ENCODE measurements at regions of chr6 and their contacts with region 1.

Region 1: DNA sequence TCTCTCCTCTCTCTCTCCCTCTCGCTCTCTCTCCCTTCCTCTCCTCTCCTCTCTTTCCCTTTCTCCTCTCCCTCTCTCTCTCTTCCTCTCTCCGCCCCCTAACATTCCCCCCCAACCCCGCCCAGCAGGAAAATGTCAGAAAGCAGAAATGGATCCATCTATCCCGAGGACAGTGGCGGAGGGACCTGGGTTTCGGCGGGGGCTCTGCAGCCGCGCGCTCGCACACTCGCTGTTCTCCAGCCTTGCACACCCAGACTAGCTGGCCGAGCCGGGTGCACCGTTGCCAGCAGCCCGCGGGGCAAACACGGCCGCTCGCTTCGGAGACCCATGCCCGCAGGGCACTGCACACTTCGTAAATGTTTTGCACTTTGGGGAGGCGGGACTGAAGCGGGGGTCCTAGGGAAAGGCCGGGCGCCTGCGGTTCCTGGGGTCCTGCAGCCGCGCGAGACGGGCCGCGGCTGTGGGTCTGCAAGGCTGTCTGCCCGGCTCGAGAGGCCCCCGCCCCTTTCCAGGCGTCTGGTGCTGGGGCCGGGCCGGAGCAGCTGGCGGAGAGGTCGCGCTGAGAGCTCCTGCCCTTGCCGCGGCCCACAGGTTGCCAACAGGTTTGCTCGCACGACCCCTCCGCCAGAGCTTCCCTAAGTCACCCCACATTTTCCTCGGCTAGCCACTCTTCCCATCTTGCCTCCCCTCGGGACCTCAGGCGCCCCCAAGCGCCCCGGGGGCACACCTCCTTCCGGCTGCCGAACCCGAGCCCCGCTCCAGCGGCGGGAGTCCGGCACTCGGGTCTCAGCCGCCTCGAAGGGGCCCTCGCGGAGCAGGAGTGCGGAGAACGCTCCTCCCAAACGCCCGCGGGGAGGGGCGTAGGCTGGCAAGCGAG is 816 bp upstream of the MDGA1 start:
- DNase-seq: peak; percentile 66 to 85 (median 74)
- H3K4me3 ChIP-seq: peak overlapping the region; percentile 47 to 60
- H3K4me3 Mint-ChIP-seq: peak overlapping the region; percentile 92 to 100 (median 100)
- H3K27ac ChIP-seq: peak overlapping the region; percentile 33
- H3K27ac Mint-ChIP-seq: peak overlapping the region; percentile 92 to 100 (median 98)
- H3K4me1 ChIP-seq: peaks cover 17% of the 10 kb centered on the region
- H3K4me1 Mint-ChIP-seq: peaks cover 17 to 52% (median 26%) of the 10 kb centered on the region in 4 donors
- H3K27me3 ChIP-seq: peaks cover 14% of the 10 kb centered on the region
- H3K27me3 Mint-ChIP-seq: peaks cover 0 to 6% of the 10 kb centered on the region in 2 donors

Region 2: DNA sequence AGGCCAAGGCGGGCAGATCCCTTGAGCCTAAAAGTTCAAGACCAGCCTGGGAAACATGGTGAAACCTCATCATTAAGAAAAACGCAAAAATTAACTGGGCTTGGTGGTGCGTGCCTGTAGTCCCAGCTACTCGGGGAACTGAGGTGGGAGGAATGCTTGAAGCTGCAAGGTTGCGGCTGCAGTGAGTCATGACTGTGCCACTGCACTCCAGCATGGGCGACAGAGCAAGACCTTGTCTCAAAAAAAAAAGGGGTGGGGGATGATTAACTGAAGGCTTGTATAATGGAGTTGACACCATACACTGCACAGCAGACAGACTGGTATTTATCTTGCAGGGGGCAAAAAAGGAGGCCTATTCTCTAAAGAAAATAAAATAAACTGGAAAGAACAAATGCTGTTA is 1805.3 kb before region 1 on chr6:
- CTCF ChIA-PET with region 1: no interaction called
- POLR2A ChIA-PET with region 1: no interaction called
- intact Hi-C with region 1: no loop called
- DNase-seq: no peak
- H3K4me3 ChIP-seq: no peak overlapping the region
- H3K4me3 Mint-ChIP-seq: no peak overlapping the region
- H3K27ac ChIP-seq: no peak overlapping the region
- H3K27ac Mint-ChIP-seq: peak overlapping the region in 1 of 7 donors; percentile 13
- H3K4me1 ChIP-seq: no peaks in the 10 kb centered on the region
- H3K4me1 Mint-ChIP-seq: peaks cover 19 to 28% (median 22%) of the 10 kb centered on the region in 4 donors
- H3K27me3 ChIP-seq: no peaks in the 10 kb centered on the region
- H3K27me3 Mint-ChIP-seq: no peaks in the 10 kb centered on the region

Region 3: DNA sequence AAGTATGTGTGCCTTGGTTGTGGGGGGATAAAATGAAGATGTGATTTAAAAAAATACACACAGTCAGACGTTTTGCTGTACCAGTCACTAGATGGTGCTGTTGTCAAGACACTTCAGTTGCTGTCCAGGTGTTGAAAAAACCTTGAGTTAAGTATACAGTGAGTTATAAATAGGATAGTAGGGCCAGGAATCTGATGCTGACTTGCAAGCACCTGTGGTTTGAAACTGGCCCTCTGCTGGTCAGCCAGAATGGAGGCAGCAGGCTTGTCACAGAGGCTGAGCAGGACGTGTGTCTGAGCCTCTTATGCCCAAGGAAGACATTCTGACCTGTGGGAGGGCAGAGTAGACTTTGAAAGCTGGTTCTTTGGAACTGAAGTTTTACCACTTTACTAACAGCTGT is 316.9 kb before region 1 on chr6:
- CTCF ChIA-PET with region 1: no interaction called
- POLR2A ChIA-PET with region 1: no interaction called
- intact Hi-C with region 1: loop called (anchors 1 kb)
- DNase-seq: peak; percentile 41 to 55 (median 45)
- H3K4me3 ChIP-seq: no peak overlapping the region
- H3K4me3 Mint-ChIP-seq: no peak overlapping the region
- H3K27ac ChIP-seq: no peak overlapping the region
- H3K27ac Mint-ChIP-seq: peak overlapping the region in 2 of 7 donors; percentile 25 to 33
- H3K4me1 ChIP-seq: no peaks in the 10 kb centered on the region
- H3K4me1 Mint-ChIP-seq: peaks cover 0 to 2% (median 0%) of the 10 kb centered on the region in 4 donors
- H3K27me3 ChIP-seq: no peaks in the 10 kb centered on the region
- H3K27me3 Mint-ChIP-seq: no peaks in the 10 kb centered on the region

Region 4: DNA sequence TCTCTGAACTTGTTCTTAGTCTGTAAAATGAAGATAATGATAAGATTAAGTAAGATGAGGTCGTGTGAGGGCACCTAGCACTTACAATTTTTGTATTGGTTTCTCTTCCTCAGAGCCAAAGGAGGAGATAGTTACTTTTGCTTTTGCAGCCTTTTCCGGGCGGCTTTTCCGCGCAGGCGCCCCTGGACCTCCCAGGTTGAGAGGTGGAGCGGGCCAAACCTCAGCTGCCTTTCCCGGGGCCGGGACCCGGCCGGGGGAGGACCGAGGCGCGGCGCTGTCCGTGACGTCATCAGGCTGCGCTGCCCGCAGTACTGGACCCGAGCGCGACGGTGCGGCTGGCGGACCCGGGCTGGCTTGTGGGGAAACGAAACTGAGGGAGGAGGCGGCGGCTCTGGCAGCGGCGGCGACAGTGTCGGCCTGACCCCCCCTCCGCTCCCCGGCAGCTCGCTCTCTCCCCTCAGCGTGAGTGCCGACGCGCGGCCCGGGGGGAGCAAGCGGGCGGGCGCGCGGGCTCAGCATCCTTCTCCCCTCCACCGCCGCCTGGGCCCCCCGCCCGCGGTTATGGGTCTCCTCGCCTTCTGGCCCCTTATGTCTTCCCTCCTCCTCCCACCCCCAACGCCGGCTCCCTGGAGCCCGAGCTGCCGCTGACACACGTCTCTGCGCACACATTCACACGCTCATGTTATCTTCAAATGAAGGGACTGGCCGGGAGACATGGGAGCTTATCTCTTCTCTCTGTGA is 265.4 kb before region 1 on chr6 and contains the start of gene CMTR1:
- CTCF ChIA-PET with region 1: no interaction called
- POLR2A ChIA-PET with region 1: interaction called, 7 read pairs
- intact Hi-C with region 1: loop called (anchors 2 kb)
- DNase-seq: peak; percentile 97 to 98 (median 97)
- H3K4me3 ChIP-seq: peak within 1 kb of the TSS; percentile 61 to 95
- H3K4me3 Mint-ChIP-seq: peak within 1 kb of the TSS; percentile 92 to 98 (median 93)
- H3K27ac ChIP-seq: peak within 1 kb of the TSS; percentile 96
- H3K27ac Mint-ChIP-seq: peak within 1 kb of the TSS; percentile 95 to 100 (median 97)
- H3K4me1 ChIP-seq: peaks cover 32% of the 10 kb centered on the region
- H3K4me1 Mint-ChIP-seq: peaks cover 24 to 52% (median 40%) of the 10 kb centered on the region in 4 donors
- H3K27me3 ChIP-seq: no peaks in the 10 kb centered on the region
- H3K27me3 Mint-ChIP-seq: peaks cover 3 to 5% of the 10 kb centered on the region in 2 donors
- total RNA-seq, gene CMTR1: 75.0 to 79.1 TPM

Region 5: GRCh38 chr6:37499433-37500293 is 198.8 kb before region 1 on chr6 and contains the start of gene CCDC167:
- CTCF ChIA-PET with region 1: no interaction called
- POLR2A ChIA-PET with region 1: interaction called, 3 read pairs
- intact Hi-C with region 1: loop called (anchors 5 kb)
- DNase-seq: peak; percentile 92 to 98 (median 94)
- H3K4me3 ChIP-seq: peak within 1 kb of the TSS; percentile 80 to 90
- H3K4me3 Mint-ChIP-seq: peak within 1 kb of the TSS; percentile 95 to 99 (median 97)
- H3K27ac ChIP-seq: peak within 1 kb of the TSS; percentile 91
- H3K27ac Mint-ChIP-seq: peak within 1 kb of the TSS; percentile 98 to 100 (median 100)
- H3K4me1 ChIP-seq: peaks cover 90% of the 10 kb centered on the region
- H3K4me1 Mint-ChIP-seq: peaks cover 60 to 97% (median 82%) of the 10 kb centered on the region in 4 donors
- H3K27me3 ChIP-seq: no peaks in the 10 kb centered on the region
- H3K27me3 Mint-ChIP-seq: no peaks in the 10 kb centered on the region
- total RNA-seq, gene CCDC167: 25.1 to 27.8 TPM

Region 6: DNA sequence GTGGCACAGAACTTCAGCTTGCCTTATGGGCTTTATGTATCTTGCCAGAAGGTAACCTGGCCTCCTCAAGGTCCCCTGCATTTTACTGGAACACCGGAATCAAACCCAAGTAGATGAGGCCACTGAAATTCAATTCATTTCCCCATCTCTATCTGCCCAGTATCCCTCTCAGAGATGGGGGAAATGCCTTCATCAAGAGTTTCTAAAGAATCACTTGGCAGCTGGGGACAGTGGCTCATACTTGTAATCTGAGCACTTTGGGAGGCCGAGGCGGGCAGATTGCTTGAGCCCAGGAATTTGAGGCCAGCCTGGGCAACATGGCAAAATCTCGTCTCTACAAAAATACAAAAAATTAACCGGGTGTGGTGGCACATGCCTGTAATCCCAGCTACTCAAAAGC is 13.7 kb before region 1 on chr6:
- CTCF ChIA-PET with region 1: no interaction called
- POLR2A ChIA-PET with region 1: no interaction called
- intact Hi-C with region 1: no loop called
- DNase-seq: no peak
- H3K4me3 ChIP-seq: no peak overlapping the region
- H3K4me3 Mint-ChIP-seq: no peak overlapping the region
- H3K27ac ChIP-seq: no peak overlapping the region
- H3K27ac Mint-ChIP-seq: no peak overlapping the region
- H3K4me1 ChIP-seq: no peaks in the 10 kb centered on the region
- H3K4me1 Mint-ChIP-seq: peaks cover 0 to 10% (median 6%) of the 10 kb centered on the region in 4 donors
- H3K27me3 ChIP-seq: no peaks in the 10 kb centered on the region
- H3K27me3 Mint-ChIP-seq: no peaks in the 10 kb centered on the region

Region 7: DNA sequence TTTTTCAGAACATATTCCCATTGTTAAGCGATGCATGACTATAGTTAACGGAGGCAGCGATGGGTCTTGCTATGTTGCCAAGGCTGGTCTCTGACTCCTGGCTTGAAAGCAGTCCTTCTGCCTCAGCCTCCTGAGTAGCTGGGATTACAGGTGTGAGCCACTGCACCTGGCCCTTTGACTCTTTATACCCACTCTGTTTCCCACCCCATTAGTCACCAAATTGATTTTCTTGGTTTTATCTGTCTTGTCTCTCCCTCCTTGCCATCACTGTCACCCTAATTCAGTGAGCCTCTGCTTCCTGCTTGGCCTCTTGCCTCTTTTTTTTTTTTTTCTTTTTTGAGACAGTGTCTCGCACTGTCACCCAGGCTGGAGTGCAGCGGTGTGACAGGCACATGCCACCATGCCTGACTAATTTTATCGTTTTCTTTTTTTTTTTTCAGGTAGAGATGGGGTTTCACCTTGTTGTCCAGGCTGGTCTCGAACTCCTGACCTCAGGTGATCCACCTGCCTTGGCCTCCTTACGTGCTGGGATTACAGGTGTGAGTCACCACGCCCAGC is 152.3 kb after region 1 on chr6:
- CTCF ChIA-PET with region 1: no interaction called
- POLR2A ChIA-PET with region 1: no interaction called
- intact Hi-C with region 1: loop called (anchors 5 kb)
- DNase-seq: no peak
- H3K4me3 ChIP-seq: no peak overlapping the region
- H3K4me3 Mint-ChIP-seq: no peak overlapping the region
- H3K27ac ChIP-seq: no peak overlapping the region
- H3K27ac Mint-ChIP-seq: peak overlapping the region in 3 of 7 donors; percentile 15 to 88 (median 41)
- H3K4me1 ChIP-seq: peaks cover 16% of the 10 kb centered on the region
- H3K4me1 Mint-ChIP-seq: peaks cover 42 to 69% (median 55%) of the 10 kb centered on the region in 4 donors
- H3K27me3 ChIP-seq: no peaks in the 10 kb centered on the region
- H3K27me3 Mint-ChIP-seq: no peaks in the 10 kb centered on the region

Region 8: GRCh38 chr6:39218873-39219536 is 1520.5 kb after region 1 on chr6:
- CTCF ChIA-PET with region 1: no interaction called
- POLR2A ChIA-PET with region 1: no interaction called
- intact Hi-C with region 1: no loop called
- DNase-seq: no peak
- H3K4me3 ChIP-seq: no peak overlapping the region
- H3K4me3 Mint-ChIP-seq: no peak overlapping the region
- H3K27ac ChIP-seq: no peak overlapping the region
- H3K27ac Mint-ChIP-seq: peak overlapping the region in 2 of 7 donors; percentile 43 to 58
- H3K4me1 ChIP-seq: peaks cover 11% of the 10 kb centered on the region
- H3K4me1 Mint-ChIP-seq: peaks cover 2 to 13% (median 5%) of the 10 kb centered on the region in 4 donors
- H3K27me3 ChIP-seq: no peaks in the 10 kb centered on the region
- H3K27me3 Mint-ChIP-seq: no peaks in the 10 kb centered on the region